OCI-LY7 (cell line): ENCODE measurements at regions of chr15 and their contacts with region 1.

Region 1: DNA sequence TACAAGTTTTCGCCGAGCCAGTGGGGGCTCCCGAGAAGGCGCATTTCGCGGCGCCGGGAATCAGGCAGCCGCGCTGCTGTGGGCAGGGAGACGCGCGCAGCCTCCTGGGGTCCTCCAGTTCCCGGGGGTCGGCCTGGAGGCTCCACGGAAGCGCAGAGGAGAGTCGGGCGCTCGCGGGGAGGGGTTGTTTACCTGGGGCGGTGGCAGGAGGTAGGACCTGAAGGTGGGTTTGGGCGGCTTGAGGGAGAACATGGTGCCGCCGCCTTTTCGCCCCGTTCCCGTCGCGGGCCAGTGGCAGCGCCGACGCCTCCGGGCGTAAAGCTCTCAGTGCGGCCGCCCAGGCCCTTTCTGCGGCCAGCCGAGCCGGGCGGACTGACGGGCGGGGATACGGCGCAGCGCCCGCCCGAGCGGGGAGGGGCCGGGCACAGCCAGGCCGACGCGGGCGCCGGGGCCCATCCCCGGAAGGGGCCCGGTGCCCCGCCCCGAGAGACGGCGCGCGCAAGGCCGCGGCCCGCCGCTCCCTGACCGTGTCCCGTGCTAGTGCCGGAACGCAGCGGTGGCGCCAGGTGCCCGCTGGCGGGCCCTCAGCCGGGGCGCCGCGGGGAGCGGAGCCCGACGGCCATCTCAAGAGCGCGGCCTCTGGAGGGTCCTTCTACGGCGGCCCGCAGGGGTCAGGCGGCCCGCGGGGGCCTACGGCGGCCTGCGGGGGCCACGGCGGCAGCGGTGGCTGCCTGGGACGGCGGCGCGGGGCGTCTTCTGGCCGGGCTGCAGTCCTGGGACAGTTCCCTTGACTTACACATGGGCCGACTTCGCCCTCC is at the start of gene MTMR10:
- DNase-seq: peak; percentile 85
- H3K4me3 ChIP-seq: peak within 1 kb of the TSS; percentile 82
- H3K27ac ChIP-seq: peak within 1 kb of the TSS; percentile 54
- H3K4me1 ChIP-seq: peaks cover 17% of the 10 kb centered on the region
- CTCF ChIP-seq: 0 out of 2 replicates have a peak, but pooled peaks have one; percentile 1
- total RNA-seq, gene MTMR10: 5.6 and 10.5 TPM in 2 replicates

Region 2: DNA sequence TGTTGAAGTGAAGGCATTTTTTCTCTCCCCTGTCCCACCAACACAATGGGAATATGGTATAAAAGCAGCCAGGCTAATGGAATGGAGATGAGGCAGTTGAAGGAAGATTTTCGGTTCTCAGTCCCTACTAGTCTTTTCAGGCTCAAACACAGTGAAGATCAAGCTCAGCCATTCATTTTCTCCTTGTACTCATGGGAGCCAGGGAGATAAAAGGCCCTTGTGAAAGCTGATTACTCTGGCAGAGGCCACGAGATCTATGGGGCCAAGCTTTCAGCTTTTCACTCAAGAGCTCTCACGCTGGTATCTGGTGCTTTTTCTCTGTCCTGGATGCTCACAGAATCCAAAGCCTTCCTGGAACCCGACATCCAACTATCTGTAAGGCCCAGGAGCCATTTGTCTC is 102.3 kb before region 1 on chr15:
- CTCF ChIA-PET with region 1: no interaction called
- POLR2A ChIA-PET with region 1: no interaction called
- intact Hi-C with region 1: no loop called
- DNase-seq: no peak
- H3K4me3 ChIP-seq: no peak overlapping the region
- H3K27ac ChIP-seq: no peak overlapping the region
- H3K4me1 ChIP-seq: no peaks in the 10 kb centered on the region
- CTCF ChIP-seq: no peak

Region 3: GRCh38 chr15:30903497-30904201 is 87.8 kb before region 1 on chr15 and contains the start of gene FAN1:
- CTCF ChIA-PET with region 1: no interaction called
- POLR2A ChIA-PET with region 1: interaction called, 3 read pairs
- intact Hi-C with region 1: loop called (anchors 5 kb)
- DNase-seq: peak; percentile 88
- H3K4me3 ChIP-seq: peak within 1 kb of the TSS; percentile 74
- H3K27ac ChIP-seq: peak within 1 kb of the TSS; percentile 13
- H3K4me1 ChIP-seq: peaks cover 14% of the 10 kb centered on the region
- CTCF ChIP-seq: 0 out of 2 replicates have a peak, but pooled peaks have one; percentile 16
- total RNA-seq, gene FAN1: 15.4 and 16.4 TPM in 2 replicates

Region 4: DNA sequence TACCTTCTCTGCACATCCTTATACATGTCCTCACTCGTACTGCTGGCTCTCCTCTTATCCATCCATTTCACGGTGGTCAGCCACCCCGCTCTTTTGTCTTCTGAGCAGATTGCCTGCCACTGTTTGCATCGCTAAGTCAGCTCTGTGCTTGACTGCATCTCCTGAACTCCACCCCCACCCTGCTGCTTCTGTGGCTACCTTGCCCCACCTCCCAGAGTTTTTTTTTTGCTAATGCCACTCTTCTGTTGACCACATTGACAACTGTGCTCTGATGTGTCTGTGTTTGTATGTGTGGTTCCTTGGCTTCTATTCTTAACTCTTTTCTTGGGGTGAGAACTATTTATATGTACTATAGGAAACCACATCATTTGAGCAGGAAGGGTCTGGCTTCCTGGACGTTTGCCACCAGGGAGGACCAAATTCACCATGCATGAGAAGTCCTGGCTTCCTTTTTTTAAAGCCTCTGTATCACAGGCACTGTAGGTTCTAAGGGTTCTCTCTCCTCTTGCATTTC is 12.8 kb after region 1 on chr15:
- CTCF ChIA-PET with region 1: no interaction called
- POLR2A ChIA-PET with region 1: interaction called, 6 read pairs
- intact Hi-C with region 1: loop called (anchors 1 kb)
- DNase-seq: peak; percentile 83
- H3K4me3 ChIP-seq: peak overlapping the region; percentile 46
- H3K27ac ChIP-seq: peak overlapping the region; percentile 13
- H3K4me1 ChIP-seq: peaks cover 23% of the 10 kb centered on the region
- CTCF ChIP-seq: no peak

Region 5: DNA sequence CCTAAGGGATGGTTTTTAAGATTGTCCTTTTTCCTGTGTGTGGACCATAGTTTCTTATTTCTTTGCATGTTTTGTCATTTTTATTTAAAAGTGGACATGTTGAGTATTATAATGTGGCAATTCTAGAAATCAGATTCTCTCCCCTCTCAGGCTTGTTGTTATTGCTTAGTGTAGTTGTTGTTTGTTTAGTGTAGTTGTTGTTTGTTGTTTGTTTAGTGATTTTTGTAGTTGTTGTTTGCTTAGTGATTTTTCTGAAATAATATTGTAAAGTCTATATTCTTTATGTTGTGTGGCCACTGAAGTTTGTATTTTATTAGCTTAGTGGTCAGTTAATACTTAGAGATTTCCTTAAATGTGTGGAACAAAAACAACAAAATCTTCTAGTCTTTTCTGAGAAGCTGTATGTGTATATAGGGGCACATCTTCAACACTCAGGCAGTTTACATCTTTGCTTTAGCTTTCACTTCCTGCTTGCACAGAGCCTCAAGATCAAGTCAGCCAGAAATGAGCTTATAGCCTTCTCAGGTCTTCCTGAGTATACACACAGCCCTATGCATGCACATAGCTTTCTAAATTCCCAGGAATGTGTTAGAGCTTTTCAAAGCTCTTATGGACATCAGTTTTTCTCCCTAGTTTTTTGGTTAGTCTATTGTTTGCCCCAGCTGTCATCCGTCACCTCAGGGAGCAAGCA is 22.2 kb after region 1 on chr15:
- CTCF ChIA-PET with region 1: interaction called, 3 read pairs
- POLR2A ChIA-PET with region 1: interaction called, 43 read pairs
- intact Hi-C with region 1: no loop called
- DNase-seq: peak; percentile 81
- H3K4me3 ChIP-seq: no peak overlapping the region
- H3K27ac ChIP-seq: peak overlapping the region; percentile 21
- H3K4me1 ChIP-seq: peaks cover 17% of the 10 kb centered on the region
- CTCF ChIP-seq: no peak

Region 6: GRCh38 chr15:31034159-31034558 is 42.7 kb after region 1 on chr15:
- CTCF ChIA-PET with region 1: no interaction called
- POLR2A ChIA-PET with region 1: no interaction called
- intact Hi-C with region 1: loop called (anchors 1 kb)
- DNase-seq: peak; percentile 17
- H3K4me3 ChIP-seq: no peak overlapping the region
- H3K27ac ChIP-seq: no peak overlapping the region
- H3K4me1 ChIP-seq: no peaks in the 10 kb centered on the region
- CTCF ChIP-seq: peak; percentile 51

Region 7: GRCh38 chr15:31128919-31129768 is 137.7 kb after region 1 on chr15:
- CTCF ChIA-PET with region 1: no interaction called
- POLR2A ChIA-PET with region 1: no interaction called
- intact Hi-C with region 1: loop called (anchors 5 kb)
- DNase-seq: peak; percentile 66
- H3K4me3 ChIP-seq: no peak overlapping the region
- H3K27ac ChIP-seq: no peak overlapping the region
- H3K4me1 ChIP-seq: peaks cover 5% of the 10 kb centered on the region
- CTCF ChIP-seq: peak; percentile 99

Region 8: GRCh38 chr15:31228985-31229826 is 237.7 kb after region 1 on chr15:
- CTCF ChIA-PET with region 1: no interaction called
- POLR2A ChIA-PET with region 1: no interaction called
- intact Hi-C with region 1: no loop called
- DNase-seq: peak; percentile 91
- H3K4me3 ChIP-seq: peak overlapping the region; percentile 77
- H3K27ac ChIP-seq: peak overlapping the region; percentile 99
- H3K4me1 ChIP-seq: peaks cover 94% of the 10 kb centered on the region
- CTCF ChIP-seq: no peak